Common myeloid progenitor, CD34-positive (primary cell): ENCODE measurements at regions of chr6 and their contacts with region 1.

Region 1: GRCh38 chr6:125956506-125957390 is at the start of gene HINT3:
- DNase-seq: peak; percentile 99
- H3K4me3 ChIP-seq: peak within 1 kb of the TSS; percentile 83 to 98 (median 90)
- H3K27ac ChIP-seq: peak within 1 kb of the TSS; percentile 83 to 93
- H3K4me1 ChIP-seq: peaks cover 13 to 27% (median 16%) of the 10 kb centered on the region in 4 experiments
- H3K27me3 ChIP-seq: no peaks in the 10 kb centered on the region

Region 2: DNA sequence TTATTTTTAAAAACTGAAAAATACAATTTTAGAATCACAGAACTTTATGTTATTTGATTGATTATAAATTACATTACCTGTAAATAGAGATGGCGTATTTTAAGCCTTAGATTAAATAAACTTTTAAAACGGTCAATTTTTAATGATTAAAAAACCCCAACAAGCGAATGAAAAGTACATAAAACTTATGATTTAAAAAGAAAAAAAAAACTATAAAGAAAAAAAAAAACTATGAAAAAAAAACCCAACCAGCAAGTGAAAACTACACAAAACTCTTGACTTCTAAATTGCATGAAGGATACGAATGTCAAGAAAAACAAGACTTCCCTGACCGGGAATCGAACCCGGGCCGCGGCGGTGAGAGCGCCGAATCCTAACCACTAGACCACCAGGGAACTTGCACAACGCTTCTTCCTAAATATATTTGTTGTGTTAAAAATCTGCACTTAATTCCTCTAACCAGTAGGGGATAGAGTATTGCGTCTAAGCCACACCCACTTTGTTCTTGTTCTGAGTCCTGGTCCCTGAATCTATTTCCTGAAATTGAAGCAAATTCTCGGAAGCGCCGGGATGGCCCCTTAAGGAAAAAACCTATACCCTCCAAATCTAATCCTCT is 176.7 kb before region 1 on chr6:
- CTCF ChIA-PET with region 1: interaction called, 204 read pairs
- POLR2A ChIA-PET with region 1: interaction called, 5 read pairs
- DNase-seq: peak; percentile 91 to 95 (median 94)
- H3K4me3 ChIP-seq: peak overlapping the region in 6 of 7 experiments; percentile 80 to 100 (median 98)
- H3K27ac ChIP-seq: peak overlapping the region; percentile 87 to 94
- H3K4me1 ChIP-seq: peaks cover 3 to 20% (median 11%) of the 10 kb centered on the region in 4 experiments
- H3K27me3 ChIP-seq: no peaks in the 10 kb centered on the region

Region 3: DNA sequence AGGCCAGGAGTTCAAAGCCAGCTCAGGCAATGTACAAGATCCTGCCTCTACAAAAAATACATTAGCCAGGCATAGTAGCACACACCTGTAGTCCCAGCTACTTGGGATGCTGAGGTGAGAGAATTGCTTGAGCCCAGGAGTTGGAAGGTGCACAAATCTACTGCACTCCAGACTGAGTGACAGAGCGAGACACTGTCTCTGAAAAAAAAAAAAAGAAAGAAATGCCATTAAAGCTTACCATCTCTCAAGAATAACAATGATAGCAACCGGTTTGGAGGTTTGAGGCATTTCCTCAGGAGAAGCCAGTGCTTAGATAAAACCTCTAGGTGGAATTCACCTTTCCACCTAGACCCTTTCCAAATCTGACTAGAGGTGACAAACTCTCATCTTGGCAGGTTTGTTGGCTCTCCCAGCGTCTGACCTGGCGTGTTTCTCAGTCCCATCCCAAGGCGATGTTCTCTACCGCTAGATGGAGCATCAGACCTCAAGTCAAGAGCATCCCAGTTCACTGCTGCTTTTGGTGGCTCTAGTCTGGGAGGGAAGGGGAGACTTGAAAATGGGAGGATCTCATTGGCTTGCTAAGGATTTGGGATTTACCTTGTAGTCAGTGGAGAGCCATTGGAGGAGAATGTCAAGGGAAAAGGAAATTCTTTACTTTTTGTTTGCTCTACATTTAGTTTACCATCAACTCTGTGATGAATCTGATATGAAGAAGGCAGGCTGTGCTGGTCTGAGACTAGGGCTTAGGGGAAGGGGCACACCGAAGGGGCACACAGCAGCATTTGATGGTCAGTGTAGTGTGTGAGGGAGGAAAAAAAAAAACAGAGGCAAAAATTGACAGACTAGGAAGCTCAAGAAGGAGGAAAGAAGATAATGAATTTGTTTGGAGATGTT is 98.1 kb before region 1 on chr6:
- CTCF ChIA-PET with region 1: interaction called, 10 read pairs
- POLR2A ChIA-PET with region 1: no interaction called
- DNase-seq: peak; percentile 59 to 67 (median 66)
- H3K4me3 ChIP-seq: no peak overlapping the region
- H3K27ac ChIP-seq: no peak overlapping the region
- H3K4me1 ChIP-seq: peaks cover 1 to 3% (median 2%) of the 10 kb centered on the region in 4 experiments
- H3K27me3 ChIP-seq: no peaks in the 10 kb centered on the region

Region 4: GRCh38 chr6:125899726-125900182 is 57.0 kb before region 1 on chr6:
- CTCF ChIA-PET with region 1: interaction called, 127 read pairs
- POLR2A ChIA-PET with region 1: no interaction called
- DNase-seq: no peak
- H3K4me3 ChIP-seq: no peak overlapping the region
- H3K27ac ChIP-seq: no peak overlapping the region
- H3K4me1 ChIP-seq: peaks cover 0 to 9% (median 6%) of the 10 kb centered on the region in 4 experiments
- H3K27me3 ChIP-seq: no peaks in the 10 kb centered on the region

Region 5: GRCh38 chr6:125918681-125919566 is 37.8 kb before region 1 on chr6:
- CTCF ChIA-PET with region 1: interaction called, 164 read pairs
- POLR2A ChIA-PET with region 1: no interaction called
- DNase-seq: peak; percentile 85 to 97 (median 96)
- H3K4me3 ChIP-seq: peak overlapping the region in 6 of 7 experiments; percentile 31 to 88 (median 62)
- H3K27ac ChIP-seq: peak overlapping the region; percentile 94 to 95
- H3K4me1 ChIP-seq: peaks cover 8 to 64% (median 33%) of the 10 kb centered on the region in 4 experiments
- H3K27me3 ChIP-seq: no peaks in the 10 kb centered on the region

Region 6: GRCh38 chr6:125974214-125974866 is 17.6 kb after region 1 on chr6:
- CTCF ChIA-PET with region 1: interaction called, 25 read pairs
- POLR2A ChIA-PET with region 1: no interaction called
- DNase-seq: peak; percentile 66 to 81 (median 79)
- H3K4me3 ChIP-seq: no peak overlapping the region
- H3K27ac ChIP-seq: no peak overlapping the region
- H3K4me1 ChIP-seq: peaks cover 0 to 2% (median 0%) of the 10 kb centered on the region in 4 experiments
- H3K27me3 ChIP-seq: no peaks in the 10 kb centered on the region